Ovary (tissue), 10 donors: ENCODE measurements at regions of chr10 and their contacts with region 1.

Region 1: GRCh38 chr10:62538606-62539005 is 164.4 kb downstream of the ZNF365 start:
- DNase-seq: no peak
- H3K4me3 ChIP-seq: no peak overlapping the region
- H3K27ac ChIP-seq: no peak overlapping the region
- H3K4me1 ChIP-seq: no peaks in the 10 kb centered on the region
- H3K27me3 ChIP-seq: no peaks in the 10 kb centered on the region
- CTCF ChIP-seq: no peak
- EP300 ChIP-seq: no peak
- POLR2A ChIP-seq: no peak

Region 2: DNA sequence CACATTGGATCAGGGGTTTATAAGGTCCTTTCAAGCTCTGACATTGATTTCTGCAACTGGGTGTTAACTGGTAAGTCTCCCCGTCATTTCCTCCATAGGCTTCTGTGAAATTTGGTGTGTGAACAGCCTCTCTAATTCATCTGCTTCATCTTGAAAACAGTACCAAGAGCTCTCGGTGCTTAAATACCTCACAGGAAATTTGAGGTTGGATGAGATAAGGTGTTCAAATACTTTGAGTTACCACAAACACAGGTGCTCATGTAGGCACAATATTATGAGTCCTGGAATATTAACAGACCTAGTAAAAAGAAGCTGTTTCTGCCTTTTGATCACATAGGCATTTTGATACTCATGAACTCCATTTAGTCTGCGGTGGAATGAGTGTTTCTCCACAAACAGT is 355.2 kb before region 1 on chr10:
- intact Hi-C with region 1: loop called in 1 of 4 experiments (anchors 10 kb)
- DNase-seq: no peak
- H3K4me3 ChIP-seq: no peak overlapping the region
- H3K27ac ChIP-seq: no peak overlapping the region
- H3K4me1 ChIP-seq: no peaks in the 10 kb centered on the region
- H3K27me3 ChIP-seq: no peaks in the 10 kb centered on the region
- CTCF ChIP-seq: no peak
- EP300 ChIP-seq: no peak
- POLR2A ChIP-seq: no peak